MCF 10A (cell line): ENCODE measurements at regions of chr7 and their contacts with region 1.

Region 1: GRCh38 chr7:129825496-129826267 is 127.1 kb downstream of the UBE2H start:
- DNase-seq: peak; percentile 72
- H3K4me3 Mint-ChIP-seq: peak overlapping the region; percentile 89
- H3K27ac Mint-ChIP-seq: peak overlapping the region; percentile 5
- H3K4me1 Mint-ChIP-seq: peaks cover 20% of the 10 kb centered on the region
- H3K27me3 Mint-ChIP-seq: no peaks in the 10 kb centered on the region
- CTCF ChIP-seq: peak; percentile 91

Region 2: GRCh38 chr7:129367700-129368388 is 457.8 kb before region 1 on chr7:
- CTCF ChIA-PET with region 1: interaction called, 3 read pairs
- POLR2A ChIA-PET with region 1: no interaction called
- intact Hi-C with region 1: loop called (anchors 2 kb)
- DNase-seq: peak; percentile 73
- H3K4me3 Mint-ChIP-seq: no peak overlapping the region
- H3K27ac Mint-ChIP-seq: no peak overlapping the region
- H3K4me1 Mint-ChIP-seq: no peaks in the 10 kb centered on the region
- H3K27me3 Mint-ChIP-seq: no peaks in the 10 kb centered on the region
- CTCF ChIP-seq: peak; percentile 86

Region 3: GRCh38 chr7:129664029-129665012 is 161.4 kb before region 1 on chr7:
- CTCF ChIA-PET with region 1: interaction called, 36 read pairs
- POLR2A ChIA-PET with region 1: interaction called, 15 read pairs
- intact Hi-C with region 1: loop called (anchors 1 kb)
- DNase-seq: peak; percentile 66
- H3K4me3 Mint-ChIP-seq: no peak overlapping the region
- H3K27ac Mint-ChIP-seq: peak overlapping the region; percentile 64
- H3K4me1 Mint-ChIP-seq: peaks cover 12% of the 10 kb centered on the region
- H3K27me3 Mint-ChIP-seq: no peaks in the 10 kb centered on the region
- CTCF ChIP-seq: peak; percentile 63

Region 4: GRCh38 chr7:129845178-129845971 is 19.7 kb after region 1 on chr7:
- CTCF ChIA-PET with region 1: interaction called, 15 read pairs
- POLR2A ChIA-PET with region 1: interaction called, 20 read pairs
- intact Hi-C with region 1: no loop called
- DNase-seq: no peak
- H3K4me3 Mint-ChIP-seq: no peak overlapping the region
- H3K27ac Mint-ChIP-seq: peak overlapping the region; percentile 95
- H3K4me1 Mint-ChIP-seq: peaks cover 47% of the 10 kb centered on the region
- H3K27me3 Mint-ChIP-seq: no peaks in the 10 kb centered on the region
- CTCF ChIP-seq: no peak

Region 5: DNA sequence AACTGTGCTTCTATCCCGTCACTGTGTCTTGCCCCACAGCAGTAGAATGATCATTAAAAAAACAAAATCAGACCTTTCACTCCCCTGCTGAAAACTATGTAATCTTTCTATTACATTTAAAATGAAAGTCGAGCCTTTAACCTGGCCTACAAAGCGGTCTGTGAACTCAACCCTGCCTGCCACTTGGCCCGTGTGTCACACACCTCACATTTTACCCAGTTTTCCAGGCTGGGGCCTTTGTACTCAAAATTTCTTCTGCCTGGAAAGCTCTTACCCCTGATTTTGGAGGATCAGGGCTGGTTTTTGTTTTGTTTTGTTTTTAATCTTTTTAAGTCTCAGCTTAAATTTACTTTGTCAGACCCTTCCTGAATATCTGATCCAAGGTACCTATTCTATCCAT is 45.0 kb after region 1 on chr7:
- CTCF ChIA-PET with region 1: interaction called, 17 read pairs
- POLR2A ChIA-PET with region 1: interaction called, 28 read pairs
- intact Hi-C with region 1: no loop called
- DNase-seq: no peak
- H3K4me3 Mint-ChIP-seq: no peak overlapping the region
- H3K27ac Mint-ChIP-seq: no peak overlapping the region
- H3K4me1 Mint-ChIP-seq: peaks cover 24% of the 10 kb centered on the region
- H3K27me3 Mint-ChIP-seq: no peaks in the 10 kb centered on the region
- CTCF ChIP-seq: no peak

Region 6: DNA sequence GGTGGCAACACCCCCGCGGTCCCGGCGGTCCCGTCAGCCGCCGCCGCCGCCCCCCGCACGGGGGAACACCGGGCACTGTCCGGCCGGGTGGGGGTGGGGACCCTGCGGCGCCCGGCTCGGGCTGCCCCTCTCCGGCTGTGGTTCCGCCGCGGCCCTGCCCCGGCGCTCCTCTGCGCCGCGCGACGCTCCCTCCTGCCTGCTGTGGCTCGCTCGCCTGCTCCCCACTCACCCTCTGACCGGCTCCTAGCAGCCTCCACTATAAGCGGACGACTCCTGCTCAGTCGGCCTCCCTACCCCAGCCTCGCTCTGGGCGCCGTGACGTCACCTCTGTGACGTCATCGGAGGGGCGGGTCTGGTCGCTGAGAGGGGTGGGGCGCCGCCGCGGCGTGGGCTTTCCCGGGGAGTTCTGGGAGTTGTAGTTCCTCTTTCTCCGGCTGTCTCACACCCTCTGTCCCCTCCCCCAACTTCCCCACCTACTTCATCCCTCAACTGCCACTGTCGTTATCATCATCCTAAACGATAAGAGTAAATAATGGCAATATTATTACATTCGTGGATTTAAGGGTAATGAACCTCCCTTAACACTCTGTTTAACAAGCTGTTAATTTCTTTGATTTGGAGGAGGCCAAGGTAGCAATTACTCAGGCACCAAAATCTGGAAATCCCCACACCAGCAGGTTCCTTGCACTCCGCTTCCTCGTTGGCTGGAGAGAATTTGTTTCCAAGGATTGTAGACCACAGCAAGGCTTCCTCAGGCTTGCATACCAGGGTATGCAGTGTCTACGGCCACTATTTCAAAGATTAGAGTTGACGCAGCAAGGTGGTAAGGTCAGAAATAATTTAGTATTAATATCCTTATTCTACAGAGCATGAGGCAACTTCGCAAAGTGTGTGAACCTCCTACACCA is 127.2 kb after region 1 on chr7 and contains the start of gene UBE2H:
- CTCF ChIA-PET with region 1: interaction called, 7 read pairs
- POLR2A ChIA-PET with region 1: interaction called, 26 read pairs
- intact Hi-C with region 1: loop called (anchors 2 kb)
- DNase-seq: peak; percentile 92
- H3K4me3 Mint-ChIP-seq: no peak within 1 kb of the TSS
- H3K27ac Mint-ChIP-seq: no peak within 1 kb of the TSS
- H3K4me1 Mint-ChIP-seq: peaks cover 9% of the 10 kb centered on the region
- H3K27me3 Mint-ChIP-seq: no peaks in the 10 kb centered on the region
- CTCF ChIP-seq: no peak
- total RNA-seq, gene UBE2H: 128 and 130 TPM in 2 replicates